PC-3 (cell line): ENCODE measurements at regions of chr12 and their contacts with region 1.

Region 1: GRCh38 chr12:109844983-109845823 is 12.0 kb upstream of the TRPV4 start:
- DNase-seq: peak; percentile 93
- ATAC-seq: peak; percentile 81
- H3K4me3 ChIP-seq: peak overlapping the region; percentile 49; the same call in 1 of the 2 replicates
- H3K27ac ChIP-seq: no peak overlapping the region
- H3K4me1 ChIP-seq: peaks cover 14% of the 10 kb centered on the region
- H3K27me3 ChIP-seq: no peaks in the 10 kb centered on the region
- CTCF ChIP-seq: peak; percentile 99

Region 2: DNA sequence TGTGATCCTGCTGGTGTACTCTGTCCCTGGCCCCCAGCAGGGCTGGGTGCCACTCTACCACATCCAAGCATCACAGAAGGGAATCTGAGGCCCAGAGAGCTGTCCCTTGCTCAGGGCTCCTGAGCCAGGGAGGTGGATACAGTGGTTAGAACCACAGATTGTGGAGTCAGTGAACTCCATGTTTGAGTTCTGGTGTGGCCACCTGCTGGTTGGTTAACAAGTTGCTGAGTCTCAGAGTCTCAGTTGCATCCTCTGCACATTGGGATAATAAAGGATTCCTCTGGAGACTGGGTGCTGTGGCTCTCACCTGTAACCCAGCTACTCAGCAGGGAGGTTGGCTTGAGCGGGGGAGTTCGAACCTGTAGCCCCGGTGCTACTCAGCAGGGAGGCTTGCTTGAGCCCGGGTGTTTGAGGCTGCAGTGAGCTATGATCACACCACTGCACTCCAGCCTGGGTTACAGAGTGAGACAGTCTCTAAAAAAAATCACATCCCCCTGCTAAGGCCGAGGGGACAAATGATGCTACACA is 232.2 kb before region 1 on chr12:
- CTCF ChIA-PET with region 1: no interaction called
- POLR2A ChIA-PET with region 1: no interaction called
- intact Hi-C with region 1: no loop called
- DNase-seq: peak; percentile 63
- ATAC-seq: peak; percentile 79
- H3K4me3 ChIP-seq: no peak overlapping the region
- H3K27ac ChIP-seq: no peak overlapping the region
- H3K4me1 ChIP-seq: no peaks in the 10 kb centered on the region
- H3K27me3 ChIP-seq: peaks cover 27% of the 10 kb centered on the region
- CTCF ChIP-seq: peak; percentile 67

Region 3: DNA sequence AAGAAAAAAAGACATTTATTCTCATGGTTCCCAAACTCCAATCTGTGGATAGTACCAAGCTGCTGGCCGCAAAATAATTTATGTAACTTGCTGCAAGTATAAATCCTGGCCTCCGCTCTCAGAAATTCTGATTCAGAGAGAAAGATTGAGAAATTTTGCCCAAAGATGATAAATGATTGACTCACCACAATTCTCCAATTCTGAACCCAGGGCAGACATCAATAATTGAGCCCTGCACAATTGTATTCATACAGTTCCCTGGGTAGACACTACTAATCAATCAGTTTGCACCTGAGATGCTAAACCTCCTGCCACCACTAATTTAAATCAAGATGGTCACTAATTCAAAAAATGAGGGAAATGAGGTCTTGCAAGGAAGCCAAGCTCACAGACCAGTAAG is 50.2 kb before region 1 on chr12:
- CTCF ChIA-PET with region 1: no interaction called
- POLR2A ChIA-PET with region 1: no interaction called
- intact Hi-C with region 1: no loop called
- DNase-seq: peak; percentile 91
- ATAC-seq: peak; percentile 63
- H3K4me3 ChIP-seq: no peak overlapping the region
- H3K27ac ChIP-seq: no peak overlapping the region
- H3K4me1 ChIP-seq: peaks cover 7% of the 10 kb centered on the region; the same call in 1 of the 2 replicates
- H3K27me3 ChIP-seq: no peaks in the 10 kb centered on the region
- CTCF ChIP-seq: no peak

Region 4: DNA sequence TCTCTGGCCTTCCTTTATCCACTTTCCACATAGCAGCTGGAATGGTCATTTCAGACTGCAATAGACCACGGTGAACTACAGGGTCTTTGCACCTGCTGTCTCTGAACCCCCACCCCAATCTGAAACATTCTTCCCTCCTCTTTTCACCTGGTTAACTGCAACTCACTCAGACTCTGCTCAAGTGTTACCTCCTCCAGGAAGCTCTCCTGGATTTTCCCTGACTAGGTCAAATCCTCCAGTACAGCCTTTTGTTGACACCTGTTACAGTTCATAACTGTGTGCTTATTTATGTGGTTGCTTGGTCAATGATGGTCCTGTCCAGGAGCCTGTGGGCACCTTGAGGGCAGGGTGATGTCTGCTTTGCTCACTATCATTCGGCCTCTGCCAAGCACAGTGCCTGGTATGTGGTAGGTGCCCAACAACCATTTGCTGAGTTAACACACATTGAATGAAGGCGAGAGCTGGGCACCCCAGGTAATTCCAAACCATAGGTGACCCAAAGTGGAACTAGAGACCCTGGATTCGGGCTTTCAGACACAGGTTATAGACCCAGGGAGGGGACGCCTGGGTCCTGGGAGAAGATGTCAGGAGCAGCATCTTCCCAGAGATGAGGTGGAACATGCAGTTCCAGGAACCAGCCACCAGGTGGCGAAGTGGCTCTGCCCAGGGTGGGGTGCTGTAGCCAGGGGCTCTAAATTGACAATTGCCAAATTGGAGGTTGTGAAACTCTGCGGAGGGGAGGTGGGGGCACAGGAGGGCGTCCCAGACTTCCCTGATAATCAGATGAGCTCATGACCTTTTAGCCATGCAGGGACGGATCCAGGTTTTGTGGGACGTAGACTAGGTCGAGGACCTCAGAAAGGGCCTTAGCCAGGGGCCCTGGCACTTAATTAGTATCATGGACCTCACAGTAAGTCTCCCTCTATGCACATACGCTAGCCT is 40.1 kb before region 1 on chr12:
- CTCF ChIA-PET with region 1: interaction called, 12 read pairs
- POLR2A ChIA-PET with region 1: no interaction called
- intact Hi-C with region 1: loop called (anchors 1 kb)
- DNase-seq: peak; percentile 86
- ATAC-seq: peak; percentile 95
- H3K4me3 ChIP-seq: no peak overlapping the region
- H3K27ac ChIP-seq: no peak overlapping the region
- H3K4me1 ChIP-seq: no peaks in the 10 kb centered on the region
- H3K27me3 ChIP-seq: no peaks in the 10 kb centered on the region
- CTCF ChIP-seq: peak; percentile 99

Region 5: GRCh38 chr12:109822951-109823411 is 22.2 kb before region 1 on chr12:
- CTCF ChIA-PET with region 1: interaction called, 4 read pairs
- POLR2A ChIA-PET with region 1: no interaction called
- intact Hi-C with region 1: loop called (anchors 2 kb)
- DNase-seq: peak; percentile 44
- ATAC-seq: peak; percentile 86
- H3K4me3 ChIP-seq: no peak overlapping the region
- H3K27ac ChIP-seq: peak overlapping the region; percentile 21; the same call in 1 of the 2 replicates
- H3K4me1 ChIP-seq: peaks cover 24% of the 10 kb centered on the region
- H3K27me3 ChIP-seq: no peaks in the 10 kb centered on the region
- CTCF ChIP-seq: no peak